Left ventricle myocardium superior (tissue), 1 donor: ENCODE measurements at regions of chr2 and their contacts with region 1.

Region 1: GRCh38 chr2:85420536-85421259 is 2.2 kb downstream of the SH2D6 start:
- DNase-seq: peak; percentile 94
- ATAC-seq: peak; percentile 81

Region 2: DNA sequence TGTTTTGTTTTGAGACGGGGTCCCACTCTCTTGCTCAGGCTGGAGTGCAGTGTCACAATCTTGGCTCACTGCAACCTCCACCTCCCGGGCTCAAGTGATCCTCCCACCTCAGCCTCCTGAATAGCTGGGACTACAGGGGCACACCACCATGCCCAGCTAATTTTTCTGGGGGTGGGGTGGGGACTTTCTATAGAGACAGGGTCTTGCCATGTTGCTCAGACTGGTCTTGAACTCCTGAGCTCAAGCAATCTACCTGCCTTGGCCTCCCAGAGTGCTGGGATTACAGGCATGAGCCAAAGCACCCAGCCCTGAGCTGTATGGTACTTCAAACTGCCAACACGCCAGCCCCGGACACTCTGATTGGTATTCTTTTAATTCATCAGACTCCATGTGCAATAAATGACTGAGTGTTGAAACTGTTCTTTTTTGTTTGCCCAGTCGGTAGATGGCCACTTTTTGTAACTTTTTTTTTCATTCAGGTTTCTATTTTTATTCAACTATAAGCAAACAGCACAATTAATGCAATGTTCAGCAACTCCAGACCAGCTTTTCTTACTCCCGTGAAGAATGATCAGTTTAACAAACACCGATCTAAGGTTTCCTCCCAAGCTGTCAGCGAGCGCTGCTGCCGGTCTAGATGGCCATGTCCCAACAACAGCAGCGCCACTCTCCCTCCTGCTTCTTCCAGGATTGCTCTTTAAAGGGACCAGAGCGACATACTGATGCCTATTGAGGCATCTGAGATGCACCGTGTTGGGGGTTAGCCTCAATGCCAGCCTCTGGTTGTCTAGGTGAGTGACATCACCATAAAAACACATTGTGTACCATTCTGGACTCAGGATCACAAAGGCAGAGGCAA is 80.4 kb before region 1 on chr2:
- intact Hi-C with region 1: no loop called
- DNase-seq: no peak
- ATAC-seq: peak; percentile 23

Region 3: GRCh38 chr2:85551698-85552678 is 131.3 kb after region 1 on chr2:
- intact Hi-C with region 1: loop called (anchors 1 kb)
- DNase-seq: peak; percentile 81
- ATAC-seq: peak; percentile 73